BJ (cell line): ENCODE measurements at regions of chr10 and their contacts with region 1.

Region 1: DNA sequence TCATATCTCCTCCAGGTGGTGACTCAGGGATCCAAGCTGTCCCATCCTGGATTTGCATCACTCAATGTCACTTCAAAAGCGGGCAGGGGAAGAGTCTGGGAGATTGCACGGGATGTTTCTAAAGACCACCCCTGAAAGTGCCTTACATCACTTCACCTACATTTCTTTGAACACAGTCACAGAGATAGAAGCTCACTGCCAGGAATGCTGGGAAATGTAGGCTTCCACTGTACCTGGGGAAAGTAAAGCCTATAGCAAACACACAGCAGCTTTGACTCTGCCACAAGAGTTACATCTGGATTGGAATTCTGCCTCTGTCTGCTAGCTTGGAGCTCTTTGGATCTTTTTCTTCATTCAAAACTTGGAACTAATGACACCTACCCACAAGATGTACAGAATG is 300.9 kb downstream of the WDR11 start:
- DNase-seq: no peak
- H3K4me3 ChIP-seq: no peak overlapping the region
- H3K27me3 ChIP-seq: no peaks in the 10 kb centered on the region
- CTCF ChIP-seq: no peak

Region 2: GRCh38 chr10:121481196-121481595 is 329.2 kb after region 1 on chr10:
- CTCF ChIA-PET with region 1: no interaction called
- POLR2A ChIA-PET with region 1: no interaction called
- DNase-seq: no peak
- H3K4me3 ChIP-seq: no peak overlapping the region
- H3K27me3 ChIP-seq: no peaks in the 10 kb centered on the region
- CTCF ChIP-seq: no peak

Region 3: DNA sequence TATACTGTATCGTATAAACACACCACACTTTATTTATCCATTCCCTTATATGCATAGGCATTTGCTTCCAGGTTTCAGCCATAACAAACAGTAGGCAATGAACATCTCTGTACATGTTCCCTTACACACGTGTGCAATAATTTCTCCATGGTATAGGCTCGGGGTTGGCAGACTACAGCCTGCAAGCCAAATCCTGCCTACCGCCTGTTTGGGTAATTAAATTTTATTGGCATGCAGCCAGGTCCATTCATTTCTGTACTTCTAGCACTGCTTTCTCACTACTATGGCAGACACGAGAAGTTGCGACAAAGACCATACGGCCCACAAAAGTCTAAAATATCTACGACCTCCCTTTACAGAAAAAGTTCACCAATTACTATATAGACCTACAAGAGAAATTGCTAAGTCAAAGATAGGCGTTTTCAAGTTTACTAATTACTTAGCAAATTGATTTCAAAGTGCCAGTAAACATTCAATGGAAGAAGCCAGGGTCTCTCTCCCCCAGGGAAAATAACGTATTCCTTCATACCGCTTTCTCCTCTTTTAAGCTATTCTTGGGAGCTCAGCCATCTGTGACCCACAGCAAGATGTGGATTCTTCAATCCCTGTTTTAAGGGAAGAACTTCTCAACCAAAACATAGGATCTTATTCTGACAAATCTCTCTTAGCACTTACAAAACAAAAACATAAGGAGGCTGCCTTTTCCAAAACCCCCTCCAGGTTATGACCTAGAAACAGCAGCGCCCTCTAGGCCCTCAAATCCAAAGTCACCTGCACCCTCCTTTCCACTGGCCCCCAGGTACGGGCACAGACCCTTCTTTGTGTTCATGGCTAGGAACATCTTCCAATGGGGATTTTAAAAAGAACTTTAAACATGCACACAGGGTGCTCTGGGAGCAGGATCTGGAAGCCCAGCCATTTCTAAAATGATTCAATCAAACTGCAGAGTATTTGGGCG is 345.8 kb after region 1 on chr10:
- CTCF ChIA-PET with region 1: no interaction called
- POLR2A ChIA-PET with region 1: no interaction called
- DNase-seq: no peak
- H3K4me3 ChIP-seq: no peak overlapping the region
- H3K27me3 ChIP-seq: no peaks in the 10 kb centered on the region
- CTCF ChIP-seq: no peak

Region 4: DNA sequence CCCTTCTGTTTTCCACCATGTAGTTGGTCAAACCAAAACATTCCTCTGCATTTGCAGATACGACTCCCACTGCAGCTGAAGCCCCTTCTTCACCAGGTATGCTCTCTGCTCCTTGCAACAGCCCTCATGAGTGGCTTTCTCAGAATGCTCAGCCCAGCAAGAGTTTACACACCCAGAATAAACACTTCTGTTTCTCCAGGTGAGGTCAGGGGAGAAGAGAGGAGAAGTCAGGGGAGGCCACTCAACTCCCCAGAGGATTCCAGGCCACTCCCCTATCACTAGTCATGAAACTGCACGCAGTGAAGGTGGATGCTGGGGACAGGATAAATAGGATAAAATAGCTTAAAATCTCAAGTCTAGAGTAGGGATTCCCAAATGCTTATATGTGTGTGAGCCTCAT is 1662.5 kb after region 1 on chr10:
- CTCF ChIA-PET with region 1: no interaction called
- POLR2A ChIA-PET with region 1: interaction called, 10 read pairs
- DNase-seq: no peak
- H3K4me3 ChIP-seq: no peak overlapping the region
- H3K27me3 ChIP-seq: peaks cover 4% of the 10 kb centered on the region; the same call in 1 of the 2 replicates
- CTCF ChIP-seq: no peak